ENCODE measurements at regions of chr22 and their contacts with region 1.

Region 1: GRCh38 chr22:36856121-36856791 is 4.5 kb upstream of the NCF4 start:
- DNase-seq: peak; percentile 94
- ATAC-seq: peak; percentile 92

Region 2: DNA sequence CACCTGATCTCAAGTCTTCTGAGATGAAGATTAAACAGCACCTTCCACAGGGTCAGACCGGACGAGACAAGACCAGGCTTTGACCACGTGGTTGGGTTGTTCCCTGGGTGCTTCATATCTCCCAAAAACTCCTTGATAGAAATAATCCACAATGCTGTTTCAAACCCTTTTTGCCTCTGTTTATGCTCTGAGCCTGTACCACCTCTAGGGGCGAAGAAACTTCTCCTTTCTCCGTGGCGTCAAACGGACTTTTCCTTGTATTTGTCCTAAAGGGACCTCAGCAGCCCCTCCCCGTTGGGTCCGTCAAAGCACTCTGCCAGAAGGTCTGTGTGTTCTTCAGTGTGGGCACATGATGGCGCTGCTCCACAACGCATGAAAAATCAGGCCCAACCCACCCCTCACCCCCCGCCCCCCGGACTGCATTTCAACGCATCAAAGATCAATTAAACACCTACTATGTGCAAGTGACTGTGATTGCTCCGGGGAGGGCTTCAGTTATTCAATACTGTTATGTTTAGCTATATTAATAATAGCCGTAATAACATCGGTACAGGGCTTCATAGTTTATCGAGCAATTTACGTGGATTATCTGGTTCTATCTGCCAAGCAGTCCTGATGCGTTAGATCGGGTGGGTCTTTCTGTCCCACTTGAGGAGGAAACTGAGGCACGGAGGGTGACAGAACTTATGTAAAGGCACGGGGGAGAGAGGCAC is 310.0 kb before region 1 on chr22:
- intact Hi-C with region 1: loop called (anchors 5 kb)
- DNase-seq: peak; percentile 37
- ATAC-seq: peak; percentile 79